ENCODE measurements at regions of chr10 and their contacts with region 1.

Region 1: DNA sequence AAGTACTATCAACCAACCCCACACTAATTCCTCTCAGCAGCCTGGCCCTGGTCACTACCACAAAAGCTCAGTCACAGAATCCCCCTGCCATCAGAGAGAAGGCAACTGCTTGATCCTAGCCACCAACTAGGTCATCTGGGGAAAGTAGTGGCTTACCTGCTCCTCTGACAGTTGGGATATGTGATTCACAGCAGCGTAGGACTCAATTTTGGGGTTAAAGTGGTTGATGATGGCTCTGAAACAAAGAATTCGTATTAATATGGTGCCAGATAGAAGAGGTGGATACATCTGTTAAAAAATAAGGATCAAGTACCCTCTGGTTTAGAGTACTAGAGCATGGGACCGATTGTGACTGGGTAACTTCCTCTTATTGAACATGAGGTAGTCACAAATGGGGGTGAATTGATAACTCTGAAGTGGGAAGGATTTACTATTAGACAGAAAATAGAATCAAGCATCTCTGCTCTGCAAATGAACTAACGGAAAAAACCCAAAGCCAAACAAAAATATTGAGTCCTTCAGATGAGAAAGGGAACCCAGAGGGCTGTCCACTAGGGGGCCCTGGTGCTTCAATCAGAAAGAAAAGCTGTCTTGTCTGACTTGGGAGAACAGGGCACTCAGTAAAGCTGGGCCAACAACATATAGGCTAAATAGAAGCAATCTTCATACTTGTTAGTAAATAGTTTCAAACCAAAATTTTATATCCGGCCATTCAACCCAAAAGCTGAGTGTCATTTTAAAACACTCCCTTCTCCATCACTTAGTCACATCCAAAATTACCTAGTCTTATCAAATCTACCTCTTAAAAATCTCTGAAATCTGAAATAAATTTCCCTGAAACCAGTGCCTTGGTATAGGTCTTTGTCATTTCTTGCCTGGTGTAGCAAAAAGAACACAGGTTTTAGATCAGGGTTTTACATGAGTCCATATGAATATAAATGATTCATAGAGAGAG is 45.9 kb upstream of the KCNIP2 start:
- DNase-seq: peak; percentile 69 to 91 (median 81)
- ATAC-seq: peak in 1 of 2 donors; percentile 59
- H3K4me3 ChIP-seq: no peak overlapping the region
- H3K27ac ChIP-seq: peak overlapping the region; percentile 77
- H3K4me1 ChIP-seq: peaks cover 9% of the 10 kb centered on the region
- H3K27me3 ChIP-seq: no peaks in the 10 kb centered on the region

Region 2: DNA sequence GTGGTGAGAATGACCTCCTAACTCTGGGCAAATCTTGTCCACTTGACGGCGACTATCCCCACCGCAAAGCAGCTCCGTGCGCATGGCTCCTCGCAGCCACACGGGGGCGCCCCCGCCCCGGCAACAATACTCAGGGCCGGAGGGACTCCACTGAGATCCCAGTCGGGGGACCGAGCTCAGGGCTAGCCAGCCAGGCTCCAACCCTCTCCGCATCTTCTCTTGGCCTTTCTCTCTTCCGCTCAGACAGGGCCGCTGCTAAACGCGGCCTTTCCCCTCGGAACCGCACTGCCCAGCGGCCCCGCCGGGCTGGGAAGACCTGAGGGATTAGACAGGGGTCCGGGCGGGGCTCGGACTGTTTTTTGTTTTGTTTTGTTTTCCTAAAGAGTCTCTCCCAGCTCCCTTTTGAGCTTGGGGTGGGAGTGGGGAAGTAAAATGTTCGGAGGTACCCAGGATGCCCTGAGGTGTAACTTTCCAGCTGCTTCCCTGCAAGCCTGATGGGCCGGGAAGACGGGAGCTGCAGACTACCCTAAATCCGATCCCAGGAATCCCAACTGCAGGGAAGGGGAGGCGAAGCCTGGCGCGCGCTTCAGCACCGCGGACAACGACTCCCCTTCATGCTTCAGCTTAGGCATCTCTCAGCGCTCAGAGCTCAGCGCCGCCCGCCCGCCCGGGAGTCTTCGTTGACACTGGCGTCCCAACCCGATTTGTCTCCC is 48.6 kb before region 1 on chr10:
- intact Hi-C with region 1: loop called in 3 of 4 experiments (anchors 5 kb)
- DNase-seq: peak; percentile 83 to 93 (median 92)
- ATAC-seq: peak; percentile 74 to 83
- H3K4me3 ChIP-seq: peak overlapping the region; percentile 52
- H3K27ac ChIP-seq: no peak overlapping the region
- H3K4me1 ChIP-seq: no peaks in the 10 kb centered on the region
- H3K27me3 ChIP-seq: no peaks in the 10 kb centered on the region

Region 3: DNA sequence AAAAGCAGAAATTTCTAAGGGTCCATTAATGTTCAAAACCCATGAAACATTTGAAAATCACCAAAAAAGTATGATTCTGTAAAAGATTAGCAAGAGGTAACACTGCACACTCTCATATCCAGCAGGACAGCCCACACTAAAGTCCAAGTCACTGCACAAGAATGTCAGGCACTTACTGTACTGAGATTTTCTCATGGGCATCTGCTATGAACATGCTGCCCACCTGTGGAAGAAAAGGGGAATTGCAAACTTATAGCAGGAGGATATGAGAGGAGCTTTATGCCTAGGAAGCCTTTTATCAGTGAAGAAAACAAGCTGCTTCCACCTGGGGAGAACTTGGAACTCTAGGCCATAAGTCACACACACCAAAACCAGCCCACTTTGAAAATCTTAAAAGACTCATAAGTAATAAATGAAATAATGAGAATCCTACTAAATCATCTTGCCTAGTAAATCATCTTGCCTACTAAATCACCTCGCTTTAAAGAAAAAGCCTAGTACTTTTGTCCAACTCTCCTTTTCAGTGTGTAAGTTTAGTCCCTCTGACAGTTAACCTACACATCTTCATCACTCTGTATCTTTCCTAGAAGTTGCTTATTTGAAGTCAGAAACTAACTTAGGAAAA is 120.4 kb after region 1 on chr10:
- intact Hi-C with region 1: loop called in 3 of 4 experiments (anchors 5 kb)
- DNase-seq: peak in 1 of 3 donors; percentile 31
- ATAC-seq: peak; percentile 93
- H3K4me3 ChIP-seq: no peak overlapping the region
- H3K27ac ChIP-seq: no peak overlapping the region
- H3K4me1 ChIP-seq: no peaks in the 10 kb centered on the region
- H3K27me3 ChIP-seq: no peaks in the 10 kb centered on the region

Measured in right cardiac atrium (tissue), 5 donors.